ENCODE measurements at regions of chr17 and their contacts with region 1.

Region 1: DNA sequence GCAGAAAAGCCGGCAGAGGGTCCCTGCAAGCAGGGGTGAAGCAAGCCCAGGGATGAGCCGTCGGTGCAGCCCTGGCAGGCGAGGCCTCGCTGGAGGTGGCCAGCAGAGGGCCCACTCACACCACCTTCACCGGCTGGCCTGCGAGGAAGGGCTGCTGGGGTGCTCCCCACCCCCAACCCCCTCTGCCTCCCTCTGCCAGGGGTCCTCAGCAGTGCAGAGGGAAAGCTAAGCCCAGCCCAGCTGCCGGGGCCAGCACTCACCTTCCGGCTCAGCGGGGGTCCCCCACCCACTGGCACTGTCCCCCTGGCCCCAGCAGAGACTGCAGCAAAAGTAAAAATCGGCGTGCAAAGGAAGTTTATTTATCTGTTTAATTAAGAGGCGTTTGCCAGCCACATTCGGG is 113.4 kb downstream of the ENGASE start:
- DNase-seq: peak; percentile 43

Region 2: DNA sequence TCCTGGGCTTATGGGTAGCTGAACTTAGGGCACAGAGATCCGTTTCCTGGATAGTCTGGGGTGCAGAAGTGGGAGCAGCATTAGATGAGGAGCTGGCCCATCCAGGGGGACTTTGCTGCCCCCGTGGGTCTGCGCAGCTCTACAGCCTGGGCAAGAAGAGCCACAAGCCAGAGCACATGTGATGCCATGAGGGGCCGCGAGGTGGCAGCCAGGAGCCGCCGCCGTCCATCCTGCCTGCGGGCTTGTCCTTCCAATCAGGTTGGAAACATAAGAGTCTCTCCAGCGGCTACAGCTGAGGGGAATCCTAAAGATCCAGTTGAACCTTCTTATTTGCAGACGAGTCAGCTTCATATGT is 142.2 kb before region 1 on chr17:
- in situ Hi-C with region 1: no loop called
- DNase-seq: peak; percentile 61

Region 3: GRCh38 chr17:79305768-79306423 is 117.8 kb after region 1 on chr17:
- in situ Hi-C with region 1: loop called (anchors 25 kb)
- DNase-seq: peak; percentile 73

Region 4: GRCh38 chr17:79393358-79394202 is 205.5 kb after region 1 on chr17:
- in situ Hi-C with region 1: loop called (anchors 25 kb)
- DNase-seq: peak; percentile 74